Naive thymus-derived CD8-positive, alpha-beta T cell (primary cell): ENCODE measurements at regions of chr19 and their contacts with region 1.

Region 1: DNA sequence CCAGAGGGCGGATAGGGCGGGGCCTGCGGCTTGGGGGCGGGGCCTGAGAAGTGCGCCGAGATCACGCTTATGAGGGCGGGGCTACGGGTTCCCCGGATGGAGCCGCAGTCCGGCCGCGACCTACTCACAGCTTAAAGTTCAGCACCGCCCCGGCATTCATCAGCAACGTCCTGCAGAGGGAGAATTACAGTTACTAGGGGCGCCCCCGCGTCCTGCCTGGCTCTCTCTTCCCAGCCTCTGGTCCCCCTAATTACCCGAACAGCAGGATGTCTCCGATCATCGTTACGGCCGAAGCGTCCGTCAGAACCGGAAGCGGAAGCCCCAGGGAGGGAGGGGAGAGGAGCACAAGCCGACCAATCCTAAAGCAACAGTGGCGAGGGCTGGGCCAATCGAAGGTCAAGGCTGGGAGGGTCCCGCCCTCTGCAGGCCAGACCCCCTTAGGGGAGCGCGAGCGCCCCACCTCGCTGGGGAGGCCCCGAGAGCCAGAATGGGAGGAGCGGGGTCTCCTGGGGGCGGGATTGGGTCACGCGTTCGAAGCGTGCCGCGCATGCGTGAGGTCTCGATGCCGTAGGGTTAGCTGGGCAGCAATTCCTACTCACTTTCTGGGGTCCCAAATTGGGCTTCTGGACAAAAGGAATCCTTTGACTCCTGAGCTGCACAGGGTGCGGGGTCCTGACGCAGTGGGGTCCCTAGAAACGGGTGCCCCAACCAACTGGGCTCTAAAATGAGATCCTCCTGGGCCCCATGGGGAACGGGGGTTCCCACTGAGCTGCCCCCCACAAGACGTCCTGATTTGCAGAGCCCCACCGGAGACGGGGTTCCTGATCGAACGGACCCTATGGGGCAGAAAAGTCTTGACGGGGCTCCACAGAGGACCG is at the start of gene SMIM7:
- DNase-seq: peak; percentile 97 to 100 (median 99)
- ATAC-seq: peak; percentile 95 to 98
- H3K4me3 Mint-ChIP-seq: peak within 1 kb of the TSS; percentile 95 to 100 (median 98)
- H3K27ac Mint-ChIP-seq: peak within 1 kb of the TSS; percentile 95 to 100 (median 99)
- H3K4me1 Mint-ChIP-seq: peaks cover 14 to 57% (median 41%) of the 10 kb centered on the region in 4 donors
- H3K27me3 Mint-ChIP-seq: no peaks in the 10 kb centered on the region
- polyA plus RNA-seq, gene SMIM7: 52.7 to 76.5 (median 63.9) TPM

Region 2: GRCh38 chr19:16542045-16542909 is 117.8 kb before region 1 on chr19 and contains the start of gene CHERP:
- POLR2A ChIA-PET with region 1: interaction called, 12 read pairs
- DNase-seq: peak; percentile 91 to 97 (median 94)
- ATAC-seq: peak; percentile 84 to 90
- H3K4me3 Mint-ChIP-seq: peak within 1 kb of the TSS; percentile 83 to 97 (median 90)
- H3K27ac Mint-ChIP-seq: peak within 1 kb of the TSS; percentile 81 to 97 (median 90)
- H3K4me1 Mint-ChIP-seq: peaks cover 33 to 71% (median 62%) of the 10 kb centered on the region in 4 donors
- H3K27me3 Mint-ChIP-seq: no peaks in the 10 kb centered on the region
- polyA plus RNA-seq, gene CHERP: 4.7 to 17.8 (median 8.6) TPM

Region 3: DNA sequence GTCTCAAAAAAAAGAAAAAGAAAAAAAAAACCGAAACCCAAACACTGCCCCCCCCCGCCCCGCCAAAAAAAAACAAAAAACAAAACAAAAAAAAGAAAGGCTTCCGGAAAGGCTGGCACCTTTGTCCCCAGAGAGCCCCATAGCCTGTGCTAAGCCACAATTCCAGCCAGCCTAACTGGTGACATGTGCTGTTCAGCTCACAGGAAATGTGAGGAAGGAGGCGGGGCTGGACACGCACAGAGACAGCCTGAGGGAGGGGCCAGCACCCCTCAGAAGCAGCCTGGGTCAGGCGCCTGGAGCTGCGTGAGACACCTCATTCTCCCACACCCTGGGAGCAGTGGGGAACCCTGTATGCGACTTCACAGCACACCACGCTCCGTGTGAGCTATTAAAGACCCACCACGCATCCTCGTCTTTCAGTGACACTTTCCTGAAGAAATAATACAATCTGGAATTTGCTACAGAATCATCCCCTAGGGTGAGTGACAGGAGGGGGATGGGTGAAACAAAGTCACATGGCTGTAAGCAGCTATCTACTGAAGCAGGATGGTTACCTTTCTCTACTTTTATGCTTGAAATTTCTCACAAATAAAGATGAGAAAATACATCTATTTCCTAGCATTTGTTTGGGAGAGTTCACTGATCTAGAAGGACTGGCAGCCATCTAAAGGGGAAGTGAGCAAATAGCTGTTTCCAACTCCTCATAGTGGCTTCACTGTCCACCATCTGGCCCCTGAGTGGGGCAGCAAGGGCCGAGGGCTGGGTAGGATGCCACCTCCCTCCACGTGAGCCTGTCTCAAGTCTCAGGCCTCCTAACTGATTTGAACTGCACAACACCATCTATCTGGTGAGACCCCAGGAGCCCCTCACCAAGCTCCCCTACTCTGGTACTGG is 75.6 kb before region 1 on chr19:
- POLR2A ChIA-PET with region 1: interaction called, 12 read pairs
- DNase-seq: peak; percentile 72 to 91 (median 86)
- ATAC-seq: peak; percentile 79 to 84
- H3K4me3 Mint-ChIP-seq: peak overlapping the region; percentile 64 to 87 (median 78)
- H3K27ac Mint-ChIP-seq: peak overlapping the region; percentile 51 to 97 (median 92)
- H3K4me1 Mint-ChIP-seq: peaks cover 23 to 94% (median 89%) of the 10 kb centered on the region in 4 donors
- H3K27me3 Mint-ChIP-seq: no peaks in the 10 kb centered on the region

Region 4: DNA sequence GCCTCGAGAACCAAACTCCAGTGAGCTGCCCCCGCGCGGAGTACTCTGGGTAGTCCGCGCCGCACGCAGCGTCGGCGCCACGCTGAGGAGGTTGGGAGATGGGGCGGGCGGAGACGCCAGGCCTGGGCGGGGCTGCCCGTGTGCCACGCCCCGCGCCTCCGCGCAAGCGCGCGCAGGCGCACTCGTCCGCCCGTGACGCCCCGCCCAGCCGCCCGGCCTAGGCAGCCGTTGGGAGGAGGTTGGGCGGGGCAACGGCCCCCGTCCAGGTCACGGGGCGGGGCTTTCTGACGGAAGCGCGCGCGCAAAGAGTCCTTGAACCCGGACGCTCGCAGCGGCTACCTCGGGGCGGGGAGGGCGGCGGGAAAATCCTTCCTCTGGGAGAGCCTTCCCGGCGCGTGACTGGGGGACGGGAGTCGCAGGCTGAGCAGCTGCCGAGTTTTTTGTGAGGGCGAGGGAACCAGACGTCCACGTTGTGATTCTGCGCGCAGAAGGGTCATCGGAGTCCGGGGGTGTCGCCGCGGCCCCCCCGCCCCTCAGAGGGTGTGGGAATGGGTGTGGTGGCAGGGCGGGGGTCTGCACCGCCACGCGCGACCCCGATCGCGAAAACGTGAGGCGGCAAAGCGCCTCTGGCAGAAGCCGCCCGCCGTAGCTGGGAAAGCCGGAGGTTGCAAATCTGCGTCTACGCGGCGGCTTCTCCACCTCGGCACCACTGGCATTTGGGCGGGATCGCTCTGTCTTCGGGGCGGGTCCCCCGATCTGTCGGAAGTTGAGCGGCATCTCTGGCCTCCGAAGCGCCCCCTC is 31.7 kb before region 1 on chr19 and contains the start of gene MED26:
- POLR2A ChIA-PET with region 1: interaction called, 24 read pairs
- DNase-seq: peak; percentile 89 to 97 (median 94)
- ATAC-seq: peak; percentile 91 to 93
- H3K4me3 Mint-ChIP-seq: peak within 1 kb of the TSS; percentile 95 to 99 (median 96)
- H3K27ac Mint-ChIP-seq: peak within 1 kb of the TSS; percentile 92 to 99 (median 98)
- H3K4me1 Mint-ChIP-seq: peaks cover 22 to 52% (median 47%) of the 10 kb centered on the region in 4 donors
- H3K27me3 Mint-ChIP-seq: no peaks in the 10 kb centered on the region
- polyA plus RNA-seq, gene MED26: 2.7 to 3.9 (median 3.1) TPM

Region 5: DNA sequence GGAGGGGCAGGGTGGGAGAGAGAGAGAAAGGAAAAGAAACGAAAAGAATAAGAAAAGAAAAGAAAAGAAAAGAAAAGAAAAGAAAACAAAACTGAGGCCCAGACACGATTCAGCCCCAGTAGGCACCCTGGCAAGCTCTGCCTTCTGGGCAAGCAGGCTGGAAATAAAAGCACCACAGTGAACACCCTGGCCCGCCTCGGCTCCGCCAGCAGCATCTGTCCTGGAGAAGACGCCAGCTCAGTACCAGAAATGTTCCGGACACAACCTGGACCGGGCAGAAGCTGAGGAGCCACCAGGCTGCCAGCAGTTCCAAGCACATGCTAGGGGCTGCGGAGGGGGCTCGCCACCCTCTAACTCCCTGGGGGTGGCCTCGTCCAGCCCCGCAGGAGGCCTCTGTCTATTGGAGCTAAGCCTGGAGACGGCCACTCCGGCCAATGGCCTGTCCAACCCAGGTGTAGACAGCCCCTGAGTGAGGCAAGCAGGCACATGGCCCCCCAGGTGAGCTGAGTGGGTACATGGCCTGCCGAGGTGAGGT is 378.0 kb after region 1 on chr19:
- POLR2A ChIA-PET with region 1: interaction called, 10 read pairs
- DNase-seq: no peak
- ATAC-seq: no peak
- H3K4me3 Mint-ChIP-seq: no peak overlapping the region
- H3K27ac Mint-ChIP-seq: no peak overlapping the region
- H3K4me1 Mint-ChIP-seq: peaks cover 0 to 2% (median 0%) of the 10 kb centered on the region in 4 donors
- H3K27me3 Mint-ChIP-seq: peaks cover 2 to 14% (median 11%) of the 10 kb centered on the region in 5 donors